ENCODE measurements at regions of chr6 and their contacts with region 1.

Region 1: GRCh38 chr6:41958022-41958856 is 16.6 kb upstream of the CCND3 start:
- DNase-seq: no peak
- H3K4me3 Mint-ChIP-seq: peak overlapping the region; percentile 75
- H3K27ac Mint-ChIP-seq: peak overlapping the region; percentile 98
- H3K4me1 Mint-ChIP-seq: peaks cover 39% of the 10 kb centered on the region
- H3K27me3 Mint-ChIP-seq: no peaks in the 10 kb centered on the region

Region 2: DNA sequence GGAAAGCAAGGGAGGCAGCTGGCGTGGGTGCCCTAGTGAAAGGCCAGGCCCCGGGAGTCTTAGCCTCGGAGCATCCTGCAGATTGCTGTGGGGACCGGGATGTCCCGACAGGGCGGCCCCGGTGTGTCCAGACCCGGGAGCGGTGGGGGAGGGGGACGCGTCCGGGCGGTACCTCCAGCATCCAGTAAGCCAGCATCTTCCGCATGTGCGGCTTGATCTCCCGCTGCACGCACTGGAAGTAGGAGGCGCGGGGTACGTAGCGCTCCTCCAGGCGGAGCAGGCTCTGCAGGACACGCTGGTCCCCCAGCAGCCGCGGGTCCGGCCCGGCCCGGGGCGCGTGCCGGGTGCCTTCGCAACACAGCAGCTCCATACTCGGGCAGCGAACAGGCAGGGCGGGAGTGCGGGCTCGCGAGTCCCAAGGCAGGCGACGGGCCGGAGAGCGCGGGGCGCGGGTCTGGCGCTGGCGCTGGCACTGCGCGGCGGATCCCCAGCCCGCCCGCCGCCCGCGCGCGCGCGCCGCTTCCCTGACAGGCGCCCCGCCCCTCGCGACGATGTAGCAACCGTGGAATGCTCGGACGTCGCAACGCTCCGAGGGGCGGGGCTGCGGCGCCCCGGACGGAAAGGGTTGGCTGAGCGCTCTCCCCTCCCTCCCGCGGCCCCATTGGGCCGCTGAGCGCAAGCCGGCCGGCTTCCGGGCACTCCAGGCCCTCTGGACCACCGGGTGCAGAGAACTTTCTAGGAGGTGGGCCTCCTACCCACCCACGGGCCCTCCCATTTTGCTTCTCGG is 16.8 kb before region 1 on chr6 and contains the start of gene CCND3:
- intact Hi-C with region 1: loop called (anchors 1 kb)
- DNase-seq: peak; percentile 97
- H3K4me3 Mint-ChIP-seq: peak within 1 kb of the TSS; percentile 100
- H3K27ac Mint-ChIP-seq: peak within 1 kb of the TSS; percentile 96
- H3K4me1 Mint-ChIP-seq: peaks cover 46% of the 10 kb centered on the region
- H3K27me3 Mint-ChIP-seq: no peaks in the 10 kb centered on the region
- total RNA-seq, gene CCND3: 483 and 491 TPM in 2 replicates

Region 3: DNA sequence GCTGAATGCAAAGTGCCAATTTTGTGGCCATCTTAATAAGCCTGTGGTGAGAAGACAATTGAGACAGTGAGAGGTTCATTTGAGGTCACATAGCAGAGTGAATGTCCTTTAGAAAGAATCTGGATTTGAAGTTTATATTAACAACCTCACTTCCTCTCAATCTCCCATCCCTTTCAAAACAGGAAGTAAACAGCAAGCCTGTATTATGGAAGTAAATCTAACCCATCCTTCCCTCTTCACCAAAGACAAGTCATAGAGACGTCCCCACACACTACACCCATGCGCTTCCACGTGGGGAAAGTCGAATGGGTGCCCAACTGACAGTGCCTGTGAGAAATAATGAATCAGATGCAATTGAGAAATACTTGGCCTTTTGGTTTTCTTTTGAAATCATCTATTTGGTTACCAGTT is 12.2 kb after region 1 on chr6:
- intact Hi-C with region 1: loop called (anchors 1 kb)
- DNase-seq: no peak
- H3K4me3 Mint-ChIP-seq: peak overlapping the region; percentile 32
- H3K27ac Mint-ChIP-seq: peak overlapping the region; percentile 90
- H3K4me1 Mint-ChIP-seq: peaks cover 36% of the 10 kb centered on the region
- H3K27me3 Mint-ChIP-seq: no peaks in the 10 kb centered on the region

Region 4: GRCh38 chr6:41976794-41977484 is 18.7 kb after region 1 on chr6:
- intact Hi-C with region 1: loop called (anchors 1 kb)
- DNase-seq: no peak
- H3K4me3 Mint-ChIP-seq: peak overlapping the region; percentile 57
- H3K27ac Mint-ChIP-seq: peak overlapping the region; percentile 87
- H3K4me1 Mint-ChIP-seq: peaks cover 43% of the 10 kb centered on the region
- H3K27me3 Mint-ChIP-seq: no peaks in the 10 kb centered on the region

Region 5: DNA sequence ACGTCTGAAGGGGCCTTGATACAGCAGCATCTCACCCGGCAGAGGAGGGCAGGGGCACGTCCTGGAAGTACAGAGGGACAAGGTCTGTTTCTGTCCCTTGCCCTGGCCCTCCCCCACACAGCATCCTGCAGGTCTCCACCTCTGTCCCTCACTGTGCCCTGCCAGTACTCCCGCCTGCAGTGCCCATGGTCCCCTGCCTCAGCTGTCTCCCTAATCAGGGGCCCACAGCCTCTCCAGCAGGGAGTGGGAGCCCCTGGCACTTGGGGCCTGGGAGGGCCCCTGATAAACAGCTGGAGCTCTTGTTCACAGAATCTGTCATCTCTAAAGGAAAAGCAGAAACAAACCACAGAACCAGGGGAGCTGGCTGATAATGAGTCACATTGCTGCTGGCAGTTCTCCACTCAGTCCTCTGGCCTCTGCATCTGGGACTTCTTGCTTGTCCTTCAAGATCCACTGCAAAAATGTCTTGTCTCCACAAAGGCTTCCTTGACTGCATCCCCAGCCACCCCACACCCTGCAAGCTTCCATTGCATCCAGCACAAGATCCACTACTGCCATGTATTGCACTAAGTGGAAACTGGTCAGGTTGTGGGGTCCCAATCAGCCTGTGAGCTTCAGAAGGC is 58.9 kb after region 1 on chr6:
- intact Hi-C with region 1: loop called (anchors 2 kb)
- DNase-seq: peak; percentile 77
- H3K4me3 Mint-ChIP-seq: peak overlapping the region; percentile 62
- H3K27ac Mint-ChIP-seq: peak overlapping the region; percentile 90
- H3K4me1 Mint-ChIP-seq: peaks cover 52% of the 10 kb centered on the region
- H3K27me3 Mint-ChIP-seq: no peaks in the 10 kb centered on the region

Region 6: GRCh38 chr6:42038811-42039408 is 80.7 kb after region 1 on chr6:
- intact Hi-C with region 1: loop called (anchors 1 kb)
- DNase-seq: no peak
- H3K4me3 Mint-ChIP-seq: peak overlapping the region; percentile 78
- H3K27ac Mint-ChIP-seq: peak overlapping the region; percentile 97
- H3K4me1 Mint-ChIP-seq: peaks cover 60% of the 10 kb centered on the region
- H3K27me3 Mint-ChIP-seq: no peaks in the 10 kb centered on the region

Measured in activated CD4-positive, alpha-beta T cell treated with anti-CD3 and anti-CD28 coated beads, Interleukin-2, amount 10 ng/mL, durations not matched to agents 24 days and 14 days (primary cell).